ENCODE measurements at regions of chr17 and their contacts with region 1.

Region 1: GRCh38 chr17:2386400-2387085 is 14.3 kb downstream of the MNT start:
- DNase-seq: no peak
- ATAC-seq: no peak
- H3K4me3 ChIP-seq: no peak overlapping the region
- H3K27ac ChIP-seq: no peak overlapping the region
- H3K4me1 ChIP-seq: no peaks in the 10 kb centered on the region
- H3K27me3 ChIP-seq: no peaks in the 10 kb centered on the region

Region 2: GRCh38 chr17:2195729-2196128 is 190.8 kb before region 1 on chr17:
- intact Hi-C with region 1: no loop called
- DNase-seq: no peak
- ATAC-seq: no peak
- H3K4me3 ChIP-seq: no peak overlapping the region
- H3K27ac ChIP-seq: no peak overlapping the region
- H3K4me1 ChIP-seq: peaks cover 0 to 2% of the 10 kb centered on the region in 2 donors
- H3K27me3 ChIP-seq: no peaks in the 10 kb centered on the region

Region 3: DNA sequence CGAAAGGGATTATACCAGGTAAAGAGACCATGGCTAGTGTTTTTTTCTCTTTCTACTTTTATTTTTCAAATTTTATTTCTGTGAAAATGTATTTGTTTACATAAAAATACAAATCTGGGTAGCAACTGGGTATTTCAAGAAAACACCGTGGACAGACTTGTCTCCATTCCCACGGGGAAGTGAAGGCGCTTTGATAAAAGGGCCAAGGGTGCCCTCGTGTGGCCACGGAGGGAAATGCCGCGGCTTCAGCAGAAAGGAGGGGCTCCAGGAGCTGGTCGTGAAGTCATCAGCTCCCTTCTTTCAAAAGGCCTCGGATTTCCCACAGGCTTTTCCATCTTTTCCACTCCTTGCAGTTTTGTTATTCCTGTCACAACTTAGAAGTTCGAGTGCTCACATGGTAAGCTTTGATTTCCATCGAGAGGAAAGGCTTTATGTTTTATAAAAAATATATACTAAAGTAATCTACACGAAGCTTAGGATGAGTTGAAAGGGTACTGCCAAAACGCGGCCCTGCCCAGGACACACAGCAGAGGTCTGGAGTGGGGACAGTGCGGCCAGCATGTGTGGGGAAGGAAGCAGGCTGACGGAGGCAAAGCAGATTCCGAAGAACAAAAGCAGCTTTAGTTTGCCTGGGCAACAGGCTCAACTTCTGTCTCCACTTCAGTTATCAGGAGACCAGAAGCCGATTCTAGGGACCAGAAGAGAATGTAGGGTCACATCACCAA is 29.6 kb after region 1 on chr17:
- intact Hi-C with region 1: loop called (anchors 1 kb)
- DNase-seq: peak; percentile 90 to 97
- ATAC-seq: peak; percentile 92
- H3K4me3 ChIP-seq: no peak overlapping the region
- H3K27ac ChIP-seq: peak overlapping the region in 1 of 2 donors; percentile 21
- H3K4me1 ChIP-seq: no peaks in the 10 kb centered on the region
- H3K27me3 ChIP-seq: no peaks in the 10 kb centered on the region

Region 4: DNA sequence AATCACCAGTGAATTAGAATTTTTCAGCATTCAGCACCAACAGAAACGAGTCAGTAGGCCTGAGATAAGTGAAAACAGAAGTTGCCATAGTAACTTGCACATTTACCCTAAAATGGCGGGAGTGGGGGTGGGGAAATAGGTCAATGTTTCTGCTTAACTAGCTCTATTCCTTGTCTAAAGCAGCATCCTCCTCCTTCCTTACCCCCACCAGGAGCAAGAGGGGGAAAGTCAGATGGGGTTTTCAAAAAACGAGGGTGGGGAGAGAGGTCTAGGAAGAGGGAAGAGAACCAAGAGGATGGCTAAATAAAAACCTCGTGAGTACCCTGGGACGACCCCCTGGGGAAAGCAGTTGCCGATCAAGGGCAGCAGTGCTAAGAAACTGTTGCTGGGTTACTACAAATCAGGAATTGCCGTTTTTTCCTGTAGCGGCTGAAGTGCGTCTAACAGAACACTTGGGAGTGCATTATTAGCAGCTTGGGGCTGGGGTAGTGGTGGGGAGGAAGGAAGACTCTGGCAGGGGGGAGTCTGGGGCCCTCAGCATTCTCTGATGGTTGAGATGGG is 48.7 kb after region 1 on chr17:
- intact Hi-C with region 1: no loop called
- DNase-seq: no peak
- ATAC-seq: no peak
- H3K4me3 ChIP-seq: no peak overlapping the region
- H3K27ac ChIP-seq: no peak overlapping the region
- H3K4me1 ChIP-seq: no peaks in the 10 kb centered on the region
- H3K27me3 ChIP-seq: no peaks in the 10 kb centered on the region

Region 5: DNA sequence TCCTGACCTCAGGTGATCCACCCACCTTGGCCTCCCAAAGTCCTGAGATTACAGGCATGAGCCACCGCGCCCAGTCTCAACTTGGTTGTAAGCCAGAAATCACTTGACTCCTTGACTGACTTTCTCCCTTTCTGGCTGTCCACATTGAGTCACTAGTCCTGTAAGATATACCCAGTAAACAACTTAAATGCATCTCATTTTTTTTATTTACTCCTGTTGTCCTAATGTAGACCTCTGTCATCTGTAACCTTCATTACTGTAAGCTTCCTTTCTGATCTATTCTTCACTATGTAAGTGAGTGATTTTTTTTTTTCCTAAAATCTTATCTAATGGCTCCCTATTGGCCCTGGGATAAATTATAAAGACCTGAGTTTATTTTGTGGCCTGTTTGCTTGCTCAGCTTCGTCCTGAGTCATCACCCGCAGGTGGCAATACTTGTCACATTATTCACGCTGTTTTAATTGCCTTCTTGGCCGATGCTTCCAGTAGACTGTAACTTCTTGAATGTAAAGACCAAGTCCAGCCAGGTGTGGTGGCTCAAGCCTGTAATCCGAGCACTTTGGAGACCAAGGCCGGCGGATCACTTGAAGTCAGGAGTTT is 247.9 kb after region 1 on chr17:
- intact Hi-C with region 1: no loop called
- DNase-seq: no peak
- ATAC-seq: no peak
- H3K4me3 ChIP-seq: no peak overlapping the region
- H3K27ac ChIP-seq: no peak overlapping the region
- H3K4me1 ChIP-seq: peaks cover 0 to 7% of the 10 kb centered on the region in 2 donors
- H3K27me3 ChIP-seq: no peaks in the 10 kb centered on the region